OCI-LY7 (cell line): ENCODE measurements at regions of chrX and their contacts with region 1.

Region 1: DNA sequence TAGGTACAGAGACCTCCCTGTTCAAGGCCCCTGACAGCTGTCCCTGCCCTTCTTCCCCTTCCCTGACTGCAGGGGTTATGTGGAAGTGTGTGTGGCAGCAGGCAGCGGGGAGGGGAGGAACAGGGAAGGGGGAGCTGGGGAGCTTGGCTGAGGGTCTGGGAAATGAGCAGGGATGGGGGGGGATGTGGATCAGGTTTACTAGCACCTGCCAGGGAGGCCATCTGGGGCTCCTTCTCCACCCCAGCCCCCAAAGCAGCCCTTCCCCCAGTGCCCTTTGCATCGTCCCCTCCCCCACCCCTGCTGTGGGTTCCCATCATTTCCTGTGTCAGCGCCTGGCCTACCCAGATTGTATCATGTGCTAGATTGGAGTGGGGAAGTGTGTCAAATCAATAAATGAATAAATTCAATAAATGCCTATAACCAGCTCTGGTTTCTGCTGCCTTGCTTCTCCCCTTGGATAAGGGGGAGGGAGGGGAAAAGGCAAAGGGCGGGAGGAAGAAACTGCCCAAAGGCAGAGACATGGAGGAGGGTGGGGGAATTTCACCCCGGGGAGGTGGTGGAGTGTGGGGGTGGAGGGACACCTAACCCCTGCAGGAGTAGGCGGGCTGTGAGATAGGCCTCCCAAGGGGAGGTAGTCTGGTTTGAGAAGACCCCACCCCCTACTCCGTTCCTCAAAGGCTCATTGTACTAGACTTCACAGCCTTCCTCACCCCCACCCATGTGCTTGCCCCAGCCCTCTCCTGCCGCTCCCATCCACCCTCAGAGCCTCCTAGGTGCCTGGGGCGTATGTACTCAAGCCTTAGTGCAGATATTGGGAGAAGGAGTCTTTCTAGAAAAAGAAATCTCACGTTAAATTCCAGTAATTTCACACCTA is 3.2 kb downstream of the CXorf65 start:
- DNase-seq: peak; percentile 60
- H3K4me3 ChIP-seq: peak overlapping the region; percentile 37
- H3K27ac ChIP-seq: peak overlapping the region; percentile 61
- H3K4me1 ChIP-seq: peaks cover 25% of the 10 kb centered on the region
- CTCF ChIP-seq: no peak

Region 2: GRCh38 chrX:71118032-71118984 is 15.0 kb after region 1 on chrX and contains the start of gene MED12:
- CTCF ChIA-PET with region 1: interaction called, 3 read pairs
- POLR2A ChIA-PET with region 1: interaction called, 10 read pairs
- intact Hi-C with region 1: no loop called
- DNase-seq: peak; percentile 77
- H3K4me3 ChIP-seq: peak within 1 kb of the TSS; percentile 81
- H3K27ac ChIP-seq: peak within 1 kb of the TSS; percentile 58
- H3K4me1 ChIP-seq: peaks cover 27% of the 10 kb centered on the region
- CTCF ChIP-seq: no peak
- total RNA-seq, gene MED12: 20.5 and 23.1 TPM in 2 replicates

Region 3: GRCh38 chrX:71432733-71433132 is 329.4 kb after region 1 on chrX:
- CTCF ChIA-PET with region 1: no interaction called
- POLR2A ChIA-PET with region 1: no interaction called
- intact Hi-C with region 1: no loop called
- DNase-seq: no peak
- H3K4me3 ChIP-seq: no peak overlapping the region
- H3K27ac ChIP-seq: no peak overlapping the region
- H3K4me1 ChIP-seq: no peaks in the 10 kb centered on the region
- CTCF ChIP-seq: no peak